ENCODE measurements at regions of chr2 and their contacts with region 1.

Region 1: GRCh38 chr2:10832203-10832936 is 19.8 kb upstream of the PDIA6 start:
- DNase-seq: peak; percentile 7
- H3K4me3 ChIP-seq: no peak overlapping the region
- CTCF ChIP-seq: peak; percentile 96

Region 2: DNA sequence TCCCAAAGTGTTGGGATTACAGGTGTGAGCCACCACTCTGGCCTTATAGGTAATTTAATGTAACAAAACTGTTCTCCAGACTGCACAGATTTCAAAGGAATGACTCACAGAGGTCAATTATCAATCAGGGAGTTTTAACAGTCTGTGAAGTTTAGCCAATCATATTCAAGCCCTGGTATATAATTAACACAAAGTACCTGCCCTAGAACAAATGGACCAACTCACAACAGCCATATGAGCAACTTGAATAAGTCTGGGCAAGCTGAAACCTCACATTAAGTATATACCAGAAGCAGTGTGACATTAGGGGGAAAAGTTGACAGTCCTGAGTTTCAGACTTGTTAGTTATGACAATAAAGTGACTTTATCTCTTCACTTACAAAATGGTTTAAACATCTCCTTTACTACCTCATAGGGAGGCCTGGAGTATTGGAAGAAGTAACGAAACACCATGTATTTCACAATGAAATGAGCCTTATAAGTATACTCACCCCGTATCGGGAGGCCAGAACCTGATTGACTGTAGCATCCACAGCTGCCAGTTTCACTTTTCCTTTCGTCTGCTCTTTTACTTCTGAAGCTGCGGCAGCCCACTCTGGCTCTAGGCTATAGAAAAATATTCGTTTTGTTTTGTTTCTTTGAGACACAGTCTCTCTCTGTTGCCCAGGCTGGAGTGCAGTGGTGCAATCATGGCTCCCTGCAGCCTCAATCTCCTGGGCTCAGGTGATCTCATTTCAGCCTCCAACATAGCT is 42.0 kb before region 1 on chr2:
- CTCF ChIA-PET with region 1: interaction called, 10 read pairs
- POLR2A ChIA-PET with region 1: no interaction called
- DNase-seq: no peak
- H3K4me3 ChIP-seq: no peak overlapping the region
- CTCF ChIP-seq: no peak

Region 3: GRCh38 chr2:10821296-10821695 is 11.1 kb before region 1 on chr2:
- CTCF ChIA-PET with region 1: interaction called, 78 read pairs
- POLR2A ChIA-PET with region 1: no interaction called
- DNase-seq: no peak
- H3K4me3 ChIP-seq: no peak overlapping the region
- CTCF ChIP-seq: no peak

Region 4: GRCh38 chr2:10860813-10861360 is 28.5 kb after region 1 on chr2:
- CTCF ChIA-PET with region 1: interaction called, 17 read pairs
- POLR2A ChIA-PET with region 1: no interaction called
- DNase-seq: no peak
- H3K4me3 ChIP-seq: no peak overlapping the region
- CTCF ChIP-seq: no peak

Region 5: DNA sequence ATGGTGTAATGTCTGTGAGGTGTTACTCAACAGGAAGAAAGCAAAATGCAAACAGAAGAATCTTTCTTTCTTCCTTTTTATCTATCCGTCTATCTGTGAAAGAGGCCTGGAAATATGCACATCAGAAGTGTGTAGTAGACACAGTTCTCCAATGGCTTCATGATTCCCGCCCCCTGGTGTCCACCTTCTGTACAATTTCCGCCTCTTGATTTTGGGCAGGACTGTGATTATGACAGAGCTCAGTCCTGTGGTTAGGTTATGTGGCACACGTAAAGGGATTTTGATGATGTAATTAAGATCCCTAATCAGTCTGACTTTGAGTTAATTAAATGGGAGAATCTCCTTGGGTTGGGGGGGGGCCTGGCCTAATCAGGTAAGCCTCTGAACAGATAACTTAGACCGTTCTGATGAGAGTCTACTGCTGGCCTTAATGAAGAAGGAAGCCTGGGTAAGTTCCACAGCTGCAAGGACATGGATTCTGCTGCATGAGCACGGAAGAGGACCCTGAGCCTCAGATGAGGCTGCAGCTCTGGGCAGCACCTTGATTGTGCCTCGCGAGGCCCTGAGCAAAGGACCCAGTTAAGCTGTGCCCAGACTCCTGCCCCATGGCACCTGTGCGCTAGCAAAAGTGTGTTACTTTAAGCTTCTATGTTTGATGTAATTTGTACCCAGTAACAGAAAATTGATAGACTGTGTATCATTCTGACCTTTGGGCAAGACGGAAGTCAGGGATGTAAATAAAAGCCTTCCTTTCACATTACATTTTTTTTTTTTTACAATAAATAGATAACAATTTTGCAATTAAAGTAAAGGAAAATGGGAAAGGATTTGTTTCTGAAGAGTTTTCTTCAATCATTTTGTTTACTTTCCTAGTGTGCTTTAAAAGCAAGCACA is 68.1 kb after region 1 on chr2:
- CTCF ChIA-PET with region 1: interaction called, 86 read pairs
- POLR2A ChIA-PET with region 1: no interaction called
- DNase-seq: no peak
- H3K4me3 ChIP-seq: no peak overlapping the region
- CTCF ChIP-seq: peak; percentile 42

Region 6: DNA sequence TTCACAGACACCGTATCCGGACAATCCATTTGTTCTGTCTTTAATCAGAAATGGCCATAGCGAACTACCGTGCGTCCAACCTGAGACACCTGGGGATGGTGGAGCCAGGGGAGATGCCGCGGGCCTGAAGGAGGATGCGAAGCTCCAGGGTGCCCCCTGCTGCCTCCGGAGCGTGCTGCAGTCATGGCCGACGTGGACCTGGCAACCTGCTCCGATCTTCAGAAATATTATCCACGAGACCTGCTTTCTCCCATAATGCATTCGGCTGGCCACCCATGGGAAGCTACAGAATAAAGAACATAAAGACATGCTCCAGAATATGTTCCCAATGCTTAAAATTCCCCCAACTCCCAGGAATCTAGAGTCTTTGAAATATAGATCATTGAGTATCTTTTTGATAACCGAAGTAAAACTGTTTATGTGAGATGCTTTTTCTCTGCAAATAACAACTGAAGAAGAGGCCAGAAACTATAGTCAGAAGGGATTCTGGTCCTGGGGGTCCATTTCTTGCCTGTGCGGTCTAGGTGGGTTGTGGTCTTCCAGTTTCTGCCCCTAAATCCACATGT is 292.2 kb after region 1 on chr2:
- CTCF ChIA-PET with region 1: interaction called, 609 read pairs
- POLR2A ChIA-PET with region 1: interaction called, 3 read pairs
- DNase-seq: no peak
- H3K4me3 ChIP-seq: no peak overlapping the region
- CTCF ChIP-seq: peak; percentile 97

Measured in AG04449 (cell line).